ENCODE measurements at regions of chr19 and their contacts with region 1.

Region 1: DNA sequence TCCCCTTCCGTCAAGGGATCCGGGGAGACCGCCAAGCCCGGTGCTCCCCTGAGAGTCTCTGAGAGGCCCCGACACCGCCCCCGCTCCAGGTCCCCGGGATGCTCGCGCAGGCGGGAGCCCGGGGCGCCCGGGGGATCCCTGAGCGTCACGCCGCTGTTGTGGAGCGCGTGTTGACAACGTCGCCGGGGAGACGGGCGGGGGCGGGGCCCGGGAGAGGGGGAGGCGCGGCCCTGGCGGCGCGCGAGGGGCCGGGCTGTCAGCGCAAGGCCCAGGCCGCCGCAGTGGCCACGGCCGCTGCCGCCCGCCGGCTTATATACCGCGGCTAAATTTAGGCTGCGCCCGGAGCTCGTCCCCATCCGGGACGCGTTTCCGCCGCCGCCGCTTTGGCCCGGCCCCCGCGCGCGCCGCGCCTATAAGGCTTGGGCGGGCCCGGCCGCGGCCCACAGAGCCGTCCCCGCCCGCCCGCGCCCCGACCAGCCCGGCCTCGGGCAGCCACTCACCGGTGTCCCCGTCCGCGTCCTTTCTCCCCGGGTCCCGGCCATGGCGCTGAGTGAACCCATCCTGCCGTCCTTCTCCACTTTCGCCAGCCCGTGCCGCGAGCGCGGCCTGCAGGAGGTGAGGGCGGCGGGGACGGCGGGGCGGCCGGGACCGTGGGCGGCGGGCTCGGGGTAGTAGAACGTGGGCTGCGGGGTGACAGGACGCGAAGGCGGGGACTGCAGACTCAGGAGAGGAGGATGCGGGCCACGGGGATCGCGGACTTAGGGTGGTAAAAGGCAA is at the start of gene KLF2:
- DNase-seq: peak; percentile 91
- H3K4me3 Mint-ChIP-seq: peak within 1 kb of the TSS; percentile 42
- H3K27ac Mint-ChIP-seq: peak within 1 kb of the TSS; percentile 29
- H3K4me1 Mint-ChIP-seq: peaks cover 35% of the 10 kb centered on the region
- H3K27me3 Mint-ChIP-seq: peaks cover 19% of the 10 kb centered on the region
- total RNA-seq, gene KLF2: 5.7 TPM in 2 replicates

Region 2: DNA sequence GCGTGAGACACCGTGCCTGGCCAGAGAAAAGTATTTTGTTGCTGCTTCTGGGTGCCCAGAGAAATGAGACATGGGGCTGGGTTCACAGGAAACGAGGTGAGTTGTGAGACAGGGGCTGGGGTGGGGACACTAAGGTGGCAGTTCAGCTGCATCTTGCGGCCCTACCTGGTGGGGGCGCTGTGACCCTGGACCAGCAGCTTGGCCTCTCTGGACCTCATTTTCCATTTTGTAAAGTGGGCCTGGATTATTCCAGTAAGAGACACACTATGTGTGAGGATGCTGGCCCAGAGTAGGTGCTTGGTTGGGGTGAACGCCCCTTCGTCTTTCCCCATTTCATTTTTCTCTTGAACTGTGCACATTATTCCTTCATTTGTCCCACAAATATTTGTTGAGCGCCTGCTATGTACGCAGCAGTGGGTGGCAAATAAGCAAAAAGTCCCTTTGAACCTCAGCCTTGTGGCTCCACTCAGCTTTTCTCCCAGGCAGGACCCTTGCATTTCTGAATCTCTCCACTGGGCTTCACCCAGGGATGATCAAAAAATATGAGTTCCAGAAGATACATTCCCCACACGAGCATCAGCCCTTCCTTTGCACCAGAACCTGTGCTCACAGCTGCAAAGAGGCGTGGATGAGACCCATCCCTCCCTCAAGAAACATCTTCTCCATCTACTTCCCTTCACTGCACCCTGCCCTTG is 482.6 kb before region 1 on chr19:
- intact Hi-C with region 1: no loop called
- DNase-seq: no peak
- H3K4me3 Mint-ChIP-seq: no peak overlapping the region
- H3K27ac Mint-ChIP-seq: no peak overlapping the region
- H3K4me1 Mint-ChIP-seq: peaks cover 20% of the 10 kb centered on the region
- H3K27me3 Mint-ChIP-seq: peaks cover 5% of the 10 kb centered on the region

Region 3: GRCh38 chr19:16283210-16284061 is 41.1 kb before region 1 on chr19:
- intact Hi-C with region 1: loop called (anchors 1 kb)
- DNase-seq: peak; percentile 32
- H3K4me3 Mint-ChIP-seq: peak overlapping the region; percentile 74
- H3K27ac Mint-ChIP-seq: peak overlapping the region; percentile 70
- H3K4me1 Mint-ChIP-seq: peaks cover 45% of the 10 kb centered on the region
- H3K27me3 Mint-ChIP-seq: peaks cover 37% of the 10 kb centered on the region